ENCODE measurements at regions of chr2 and their contacts with region 1.

Region 1: GRCh38 chr2:216698895-216699294 is 3.5 kb upstream of the IGFBP5 start:
- DNase-seq: peak; percentile 30 to 50 (median 36)
- ATAC-seq: peak; percentile 87
- H3K4me3 ChIP-seq: no peak overlapping the region
- H3K27ac ChIP-seq: no peak overlapping the region
- H3K4me1 ChIP-seq: peaks cover 0 to 9% of the 10 kb centered on the region in 2 experiments; a peak in 4 of 5 replicates
- H3K27me3 ChIP-seq: no peaks in the 10 kb centered on the region; a peak in 1 of 5 replicates
- CTCF ChIP-seq: peak; percentile 63 to 75 (median 68); a peak in 5 of 6 replicates
- EP300 ChIP-seq: no peak
- POLR2A ChIP-seq: no peak
- RAD21 ChIP-seq: peak; percentile 78 to 87

Region 2: GRCh38 chr2:216807857-216808272 is 109.0 kb after region 1 on chr2:
- CTCF ChIA-PET with region 1: no interaction called
- POLR2A ChIA-PET with region 1: no interaction called
- in situ Hi-C with region 1: no loop called
- intact Hi-C with region 1: no loop called
- DNase-seq: no peak
- ATAC-seq: no peak
- H3K4me3 ChIP-seq: no peak overlapping the region
- H3K27ac ChIP-seq: no peak overlapping the region
- H3K4me1 ChIP-seq: peaks cover 0 to 6% of the 10 kb centered on the region in 2 experiments; a peak in 3 of 5 replicates
- H3K27me3 ChIP-seq: peaks cover 2 to 19% of the 10 kb centered on the region in 2 experiments; a peak in 3 of 5 replicates
- CTCF ChIP-seq: no peak
- EP300 ChIP-seq: no peak
- POLR2A ChIP-seq: no peak
- RAD21 ChIP-seq: no peak

Region 3: GRCh38 chr2:216880509-216881184 is 181.8 kb after region 1 on chr2:
- CTCF ChIA-PET with region 1: no interaction called
- POLR2A ChIA-PET with region 1: no interaction called
- in situ Hi-C with region 1: no loop called
- intact Hi-C with region 1: loop called (anchors 5 kb)
- DNase-seq: peak; percentile 53 to 93 (median 72)
- ATAC-seq: peak; percentile 92
- H3K4me3 ChIP-seq: no peak overlapping the region
- H3K27ac ChIP-seq: peak overlapping the region; percentile 78
- H3K4me1 ChIP-seq: peaks cover 41 to 49% of the 10 kb centered on the region in 2 experiments
- H3K27me3 ChIP-seq: no peaks in the 10 kb centered on the region
- CTCF ChIP-seq: no peak
- EP300 ChIP-seq: peak; percentile 88
- POLR2A ChIP-seq: peak; percentile 54
- RAD21 ChIP-seq: no peak

Region 4: DNA sequence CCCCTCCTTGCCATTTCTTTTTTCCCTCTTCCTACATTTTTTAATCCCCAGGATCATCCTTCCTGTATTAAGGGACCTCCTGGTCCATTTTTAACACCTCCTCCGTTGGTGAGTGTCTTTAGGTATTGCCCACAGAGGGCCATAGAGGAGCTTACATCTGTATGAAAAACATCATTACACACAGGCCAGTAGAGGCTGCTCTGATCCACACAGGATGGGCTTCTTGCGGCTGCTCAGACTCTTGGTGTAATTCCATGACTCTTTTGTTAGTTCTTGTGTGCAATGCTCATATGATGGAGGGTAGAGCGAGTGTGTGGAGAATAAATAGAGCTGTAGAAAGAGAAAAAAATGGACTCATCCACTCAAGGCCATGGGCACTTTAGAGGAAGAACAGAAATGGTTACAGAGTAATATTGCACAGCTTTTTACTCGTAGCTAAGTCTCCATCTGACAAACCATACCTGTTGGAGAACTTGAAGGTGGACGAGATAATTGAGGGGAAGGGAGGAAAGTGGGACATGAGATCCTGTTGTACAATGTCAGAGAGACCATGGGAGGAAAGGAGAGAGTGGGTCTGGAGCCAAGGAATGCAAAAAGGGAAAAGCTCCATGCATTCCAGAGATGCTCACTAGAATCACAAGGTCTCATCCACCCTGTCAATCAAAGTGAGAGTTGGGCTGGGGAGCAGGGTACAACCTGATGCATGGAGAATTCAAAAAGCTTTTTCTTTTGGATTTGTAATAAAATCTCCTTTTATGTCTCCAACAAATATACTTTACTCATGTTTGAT is 290.6 kb after region 1 on chr2:
- CTCF ChIA-PET with region 1: interaction called, 3 read pairs
- POLR2A ChIA-PET with region 1: no interaction called
- in situ Hi-C with region 1: loop called (anchors 10 kb)
- intact Hi-C with region 1: loop called (anchors 5 kb)
- DNase-seq: peak in 2 of 4 experiments; percentile 13 to 14
- ATAC-seq: peak; percentile 66
- H3K4me3 ChIP-seq: no peak overlapping the region
- H3K27ac ChIP-seq: no peak overlapping the region
- H3K4me1 ChIP-seq: peaks cover 0 to 8% of the 10 kb centered on the region in 2 experiments; a peak in 2 of 5 replicates
- H3K27me3 ChIP-seq: peaks cover 0 to 16% of the 10 kb centered on the region in 2 experiments; a peak in 3 of 5 replicates
- CTCF ChIP-seq: peak; percentile 26 to 57 (median 50); a peak in 5 of 6 replicates
- EP300 ChIP-seq: no peak
- POLR2A ChIP-seq: no peak
- RAD21 ChIP-seq: peak in 1 of 2 experiments; percentile 55; a peak in 2 of 4 replicates

Region 5: GRCh38 chr2:217166241-217166850 is 467.5 kb after region 1 on chr2:
- CTCF ChIA-PET with region 1: interaction called, 3 read pairs
- POLR2A ChIA-PET with region 1: no interaction called
- in situ Hi-C with region 1: no loop called
- intact Hi-C with region 1: loop called (anchors 1 kb)
- DNase-seq: peak; percentile 8 to 57 (median 20)
- ATAC-seq: peak; percentile 90
- H3K4me3 ChIP-seq: no peak overlapping the region
- H3K27ac ChIP-seq: no peak overlapping the region
- H3K4me1 ChIP-seq: peaks cover 0 to 6% of the 10 kb centered on the region in 2 experiments; a peak in 2 of 5 replicates
- H3K27me3 ChIP-seq: no peaks in the 10 kb centered on the region
- CTCF ChIP-seq: peak; percentile 61 to 71 (median 64)
- EP300 ChIP-seq: no peak
- POLR2A ChIP-seq: no peak
- RAD21 ChIP-seq: peak; percentile 87 to 94

Region 6: GRCh38 chr2:217713395-217714286 is 1014.7 kb after region 1 on chr2:
- CTCF ChIA-PET with region 1: no interaction called
- POLR2A ChIA-PET with region 1: no interaction called
- in situ Hi-C with region 1: loop called (anchors 25 kb)
- intact Hi-C with region 1: no loop called
- DNase-seq: peak; percentile 57 to 64 (median 64)
- ATAC-seq: peak; percentile 91
- H3K4me3 ChIP-seq: no peak overlapping the region
- H3K27ac ChIP-seq: no peak overlapping the region
- H3K4me1 ChIP-seq: 0 out of 5 replicates have a peak, but pooled peaks cover 0 to 3% of the 10 kb centered on the region in 2 experiments
- H3K27me3 ChIP-seq: peaks cover 0 to 14% of the 10 kb centered on the region in 2 experiments; a peak in 2 of 5 replicates
- CTCF ChIP-seq: peak; percentile 72 to 85 (median 84)
- EP300 ChIP-seq: no peak
- POLR2A ChIP-seq: no peak
- RAD21 ChIP-seq: peak; percentile 78 to 82

Measured in K562 (cell line).